CD8-positive, alpha-beta T cell (primary cell): ENCODE measurements at regions of chr16 and their contacts with region 1.

Region 1: GRCh38 chr16:68040507-68041288 is 17.6 kb downstream of the DUS2 start:
- DNase-seq: peak; percentile 84 to 98 (median 90)
- ATAC-seq: peak; percentile 99
- H3K4me3 ChIP-seq: no peak overlapping the region
- H3K4me3 Mint-ChIP-seq: no peak overlapping the region
- H3K27ac ChIP-seq: peak overlapping the region in 1 of 2 experiments; percentile 7
- H3K27ac Mint-ChIP-seq: peak overlapping the region; percentile 45
- H3K4me1 ChIP-seq: peaks cover 6% of the 10 kb centered on the region
- H3K4me1 Mint-ChIP-seq: peaks cover 11% of the 10 kb centered on the region
- H3K27me3 ChIP-seq: no peaks in the 10 kb centered on the region
- H3K27me3 Mint-ChIP-seq: no peaks in the 10 kb centered on the region
- CTCF ChIP-seq: peak; percentile 88

Region 2: GRCh38 chr16:67546761-67547422 is 493.8 kb before region 1 on chr16:
- CTCF ChIA-PET with region 1: no interaction called
- POLR2A ChIA-PET with region 1: no interaction called
- intact Hi-C with region 1: no loop called
- DNase-seq: peak; percentile 42 to 87 (median 77)
- ATAC-seq: peak; percentile 24
- H3K4me3 ChIP-seq: peak overlapping the region in 1 of 2 experiments; percentile 51
- H3K4me3 Mint-ChIP-seq: peak overlapping the region; percentile 75
- H3K27ac ChIP-seq: peak overlapping the region; percentile 36 to 57
- H3K27ac Mint-ChIP-seq: peak overlapping the region; percentile 94
- H3K4me1 ChIP-seq: peaks cover 42% of the 10 kb centered on the region
- H3K4me1 Mint-ChIP-seq: peaks cover 53% of the 10 kb centered on the region
- H3K27me3 ChIP-seq: no peaks in the 10 kb centered on the region
- H3K27me3 Mint-ChIP-seq: no peaks in the 10 kb centered on the region
- CTCF ChIP-seq: peak; percentile 99

Region 3: GRCh38 chr16:67672739-67673662 is 367.7 kb before region 1 on chr16:
- CTCF ChIA-PET with region 1: no interaction called
- POLR2A ChIA-PET with region 1: no interaction called
- intact Hi-C with region 1: loop called in 1 of 2 experiments (anchors 2 kb)
- DNase-seq: peak in 5 of 9 experiments; percentile 50 to 60 (median 53)
- ATAC-seq: no peak
- H3K4me3 ChIP-seq: no peak overlapping the region
- H3K4me3 Mint-ChIP-seq: no peak overlapping the region
- H3K27ac ChIP-seq: no peak overlapping the region
- H3K27ac Mint-ChIP-seq: no peak overlapping the region
- H3K4me1 ChIP-seq: peaks cover 4% of the 10 kb centered on the region
- H3K4me1 Mint-ChIP-seq: peaks cover 5% of the 10 kb centered on the region
- H3K27me3 ChIP-seq: no peaks in the 10 kb centered on the region
- H3K27me3 Mint-ChIP-seq: no peaks in the 10 kb centered on the region
- CTCF ChIP-seq: peak; percentile 25

Region 4: DNA sequence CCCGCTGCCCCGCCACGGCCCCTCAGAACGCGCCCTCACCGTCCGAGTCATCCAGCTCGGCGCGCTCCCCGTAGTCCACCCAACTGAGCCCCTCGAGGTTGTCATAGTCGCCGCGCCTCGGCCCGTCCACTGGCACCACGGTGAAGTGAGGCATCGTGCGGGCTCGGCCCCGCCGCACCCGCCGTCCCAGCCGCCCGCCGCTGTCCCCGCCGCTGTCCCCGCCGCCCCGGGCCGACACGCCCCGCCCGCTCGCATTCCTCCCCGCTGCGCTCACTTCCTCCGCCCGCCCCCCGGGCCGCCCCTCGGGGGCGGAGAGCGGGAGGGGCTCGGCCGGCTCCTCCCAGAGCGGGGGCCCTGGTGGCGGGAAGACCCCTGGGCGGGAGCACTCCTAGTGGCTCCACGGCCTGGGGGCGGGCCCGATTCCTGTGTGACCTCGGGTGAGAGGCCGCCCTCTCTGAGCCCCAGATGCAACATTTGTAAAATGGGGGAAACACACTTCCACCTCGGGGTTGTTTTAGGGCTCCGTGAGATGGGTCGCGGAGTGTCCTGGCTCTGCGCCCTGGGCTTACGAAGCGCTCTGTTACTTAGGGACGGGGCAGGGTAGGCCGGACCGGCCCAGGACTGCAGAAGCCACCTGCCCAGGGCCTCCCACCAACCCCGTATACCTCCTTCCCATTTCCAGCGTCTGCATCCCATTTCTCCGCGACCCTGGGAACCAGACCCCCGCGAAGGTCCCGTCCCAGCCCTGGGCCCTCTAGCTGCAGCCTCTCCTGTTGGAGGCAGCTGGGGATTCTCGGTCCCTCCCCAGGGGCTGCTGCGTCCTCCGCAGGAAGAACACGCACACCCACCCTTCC is 72.1 kb before region 1 on chr16 and contains the start of gene SLC12A4:
- CTCF ChIA-PET with region 1: interaction called, 5 read pairs
- POLR2A ChIA-PET with region 1: interaction called, 3 read pairs
- intact Hi-C with region 1: loop called in 1 of 2 experiments (anchors 1 kb)
- DNase-seq: peak; percentile 66 to 93 (median 86)
- ATAC-seq: peak; percentile 90
- H3K4me3 ChIP-seq: peak within 1 kb of the TSS; percentile 78 to 97
- H3K4me3 Mint-ChIP-seq: peak within 1 kb of the TSS; percentile 83
- H3K27ac ChIP-seq: peak within 1 kb of the TSS; percentile 44 to 59
- H3K27ac Mint-ChIP-seq: peak within 1 kb of the TSS; percentile 94
- H3K4me1 ChIP-seq: peaks cover 15% of the 10 kb centered on the region
- H3K4me1 Mint-ChIP-seq: peaks cover 21% of the 10 kb centered on the region
- H3K27me3 ChIP-seq: no peaks in the 10 kb centered on the region
- H3K27me3 Mint-ChIP-seq: no peaks in the 10 kb centered on the region
- CTCF ChIP-seq: no peak
- total RNA-seq, gene SLC12A4: 20.1 to 20.7 TPM

Region 5: DNA sequence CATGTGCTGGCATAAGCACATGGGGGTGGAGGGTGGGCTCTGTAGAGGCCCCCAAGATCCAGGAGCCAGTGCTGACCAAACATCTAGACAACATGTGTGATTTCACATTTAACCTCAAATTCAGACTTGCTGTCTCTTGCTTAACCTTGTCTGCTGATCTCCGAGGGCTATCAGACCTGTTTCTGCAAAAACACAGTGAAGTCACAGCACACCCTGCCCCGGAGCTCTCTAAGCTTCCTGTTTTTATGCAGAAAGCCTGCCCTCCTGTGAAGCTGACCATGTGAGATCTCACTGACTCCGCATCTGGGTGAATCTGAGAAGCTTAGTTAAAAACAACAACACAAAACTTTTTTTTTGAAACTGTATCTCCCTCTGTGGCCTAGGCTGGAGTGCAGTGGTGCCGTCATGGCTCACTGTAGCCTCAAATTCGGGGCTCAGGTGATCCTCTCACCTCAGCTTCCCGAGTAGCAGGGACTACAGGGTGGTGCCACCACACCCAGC is 34.9 kb before region 1 on chr16:
- CTCF ChIA-PET with region 1: interaction called, 162 read pairs
- POLR2A ChIA-PET with region 1: interaction called, 6 read pairs
- intact Hi-C with region 1: no loop called
- DNase-seq: peak; percentile 39 to 85 (median 67)
- ATAC-seq: peak; percentile 96
- H3K4me3 ChIP-seq: no peak overlapping the region
- H3K4me3 Mint-ChIP-seq: peak overlapping the region; percentile 51
- H3K27ac ChIP-seq: peak overlapping the region; percentile 75 to 85
- H3K27ac Mint-ChIP-seq: peak overlapping the region; percentile 99
- H3K4me1 ChIP-seq: peaks cover 33% of the 10 kb centered on the region
- H3K4me1 Mint-ChIP-seq: peaks cover 39% of the 10 kb centered on the region
- H3K27me3 ChIP-seq: no peaks in the 10 kb centered on the region
- H3K27me3 Mint-ChIP-seq: no peaks in the 10 kb centered on the region
- CTCF ChIP-seq: no peak

Region 6: GRCh38 chr16:68028996-68029395 is 11.7 kb before region 1 on chr16:
- CTCF ChIA-PET with region 1: interaction called, 20 read pairs
- POLR2A ChIA-PET with region 1: no interaction called
- intact Hi-C with region 1: no loop called
- DNase-seq: no peak
- ATAC-seq: no peak
- H3K4me3 ChIP-seq: no peak overlapping the region
- H3K4me3 Mint-ChIP-seq: no peak overlapping the region
- H3K27ac ChIP-seq: no peak overlapping the region
- H3K27ac Mint-ChIP-seq: no peak overlapping the region
- H3K4me1 ChIP-seq: peaks cover 4% of the 10 kb centered on the region
- H3K4me1 Mint-ChIP-seq: peaks cover 11% of the 10 kb centered on the region
- H3K27me3 ChIP-seq: no peaks in the 10 kb centered on the region
- H3K27me3 Mint-ChIP-seq: no peaks in the 10 kb centered on the region
- CTCF ChIP-seq: no peak

Region 7: GRCh38 chr16:68064791-68065365 is 24.2 kb after region 1 on chr16:
- CTCF ChIA-PET with region 1: interaction called, 12 read pairs
- POLR2A ChIA-PET with region 1: no interaction called
- intact Hi-C with region 1: loop called in 1 of 2 experiments (anchors 1 kb)
- DNase-seq: peak; percentile 39 to 86 (median 73)
- ATAC-seq: peak; percentile 82
- H3K4me3 ChIP-seq: no peak overlapping the region
- H3K4me3 Mint-ChIP-seq: no peak overlapping the region
- H3K27ac ChIP-seq: peak overlapping the region in 1 of 2 experiments; percentile 58
- H3K27ac Mint-ChIP-seq: peak overlapping the region; percentile 92
- H3K4me1 ChIP-seq: peaks cover 72% of the 10 kb centered on the region
- H3K4me1 Mint-ChIP-seq: peaks cover 76% of the 10 kb centered on the region
- H3K27me3 ChIP-seq: no peaks in the 10 kb centered on the region
- H3K27me3 Mint-ChIP-seq: no peaks in the 10 kb centered on the region
- CTCF ChIP-seq: peak; percentile 85